ENCODE measurements at regions of chr2 and their contacts with region 1.

Region 1: DNA sequence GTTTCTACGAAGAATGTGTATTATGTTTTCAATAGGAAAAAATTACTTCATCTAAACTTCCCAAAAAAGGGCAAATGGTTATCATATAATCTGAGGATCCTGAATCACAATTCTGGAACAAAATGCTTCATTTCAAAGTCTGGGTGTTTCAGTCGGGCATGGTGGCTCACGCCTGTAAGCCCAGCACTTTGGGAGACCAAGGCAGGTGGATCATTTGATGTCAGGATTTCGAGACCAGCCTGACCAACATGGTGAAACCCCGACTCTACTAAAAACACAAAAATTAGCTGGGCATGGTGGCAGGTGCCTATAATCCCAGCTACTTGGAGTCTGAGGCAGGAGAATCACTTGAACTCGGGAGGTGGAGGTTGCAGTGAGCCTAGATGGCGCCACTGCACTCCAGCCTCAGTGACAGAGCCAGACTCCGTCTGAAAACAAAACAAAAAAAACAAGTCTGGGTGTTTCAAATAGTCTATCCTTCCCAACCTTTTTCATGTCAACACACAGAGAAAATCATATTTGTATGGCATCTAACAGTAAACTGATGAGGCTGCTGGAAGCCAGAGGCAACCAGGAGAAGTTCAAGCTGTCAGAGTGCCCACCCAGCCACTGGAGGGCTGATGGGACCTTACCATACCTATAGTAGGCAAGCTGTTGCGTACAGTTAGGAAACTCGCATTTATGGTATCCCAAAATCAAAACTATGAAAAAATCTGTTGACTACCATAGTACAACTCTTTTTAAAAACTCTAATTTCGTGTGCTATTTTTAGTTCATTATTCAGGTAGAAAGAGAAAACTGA is 14.6 kb downstream of the NBAS start:
- DNase-seq: no peak
- ATAC-seq: no peak
- H3K4me3 ChIP-seq: no peak overlapping the region
- H3K27ac ChIP-seq: no peak overlapping the region
- H3K4me1 ChIP-seq: no peaks in the 10 kb centered on the region
- H3K27me3 ChIP-seq: no peaks in the 10 kb centered on the region
- CTCF ChIP-seq: no peak
- EP300 ChIP-seq: no peak
- POLR2A ChIP-seq: no peak
- RAD21 ChIP-seq: no peak

Region 2: DNA sequence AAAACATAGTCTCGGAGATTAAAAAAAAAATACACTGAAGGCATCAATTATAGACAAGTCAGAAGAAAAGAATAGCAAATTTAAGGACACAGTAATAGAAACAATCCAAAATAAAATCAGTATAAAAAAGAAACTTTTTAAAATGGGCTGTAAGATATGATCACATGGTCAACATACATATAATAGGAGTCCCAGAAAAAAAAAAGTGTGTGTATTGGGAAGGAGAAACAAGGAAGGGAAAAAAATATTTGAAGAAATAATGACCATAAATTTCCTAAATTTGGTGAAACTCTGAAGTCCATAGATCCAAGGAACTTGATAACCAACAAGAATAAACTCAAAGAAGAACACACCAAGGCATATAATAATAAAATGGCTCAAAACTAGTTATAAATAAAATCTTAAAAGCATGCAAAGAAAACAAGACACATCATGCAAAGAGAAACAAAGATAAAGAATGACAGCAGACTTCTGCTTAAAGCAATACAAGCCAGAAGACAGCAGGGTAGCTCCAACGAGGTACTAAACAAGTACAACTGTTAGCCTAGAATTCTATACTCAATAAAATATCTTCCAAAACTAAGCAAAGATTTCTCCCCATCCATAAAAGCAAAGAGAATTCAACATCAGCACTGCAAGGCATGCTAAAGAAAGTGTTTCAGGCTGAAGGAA is 100.5 kb before region 1 on chr2:
- CTCF ChIA-PET with region 1: no interaction called
- POLR2A ChIA-PET with region 1: no interaction called
- RAD21 ChIA-PET with region 1: no interaction called
- SMC1A ChIA-PET with region 1: no interaction called
- in situ Hi-C with region 1: no loop called
- intact Hi-C with region 1: no loop called
- DNase-seq: no peak
- ATAC-seq: no peak
- H3K4me3 ChIP-seq: no peak overlapping the region
- H3K27ac ChIP-seq: no peak overlapping the region
- H3K4me1 ChIP-seq: no peaks in the 10 kb centered on the region
- H3K27me3 ChIP-seq: no peaks in the 10 kb centered on the region
- CTCF ChIP-seq: no peak
- EP300 ChIP-seq: no peak
- POLR2A ChIP-seq: no peak
- RAD21 ChIP-seq: no peak

Region 3: GRCh38 chr2:15560988-15561573 is 14.6 kb after region 1 on chr2 and contains the start of gene NBAS:
- CTCF ChIA-PET with region 1: interaction called, 21 read pairs
- POLR2A ChIA-PET with region 1: no interaction called
- RAD21 ChIA-PET with region 1: no interaction called
- SMC1A ChIA-PET with region 1: interaction called, 7 read pairs
- in situ Hi-C with region 1: no loop called
- intact Hi-C with region 1: no loop called
- DNase-seq: peak; percentile 37
- ATAC-seq: peak; percentile 89
- H3K4me3 ChIP-seq: peak within 1 kb of the TSS; percentile 99
- H3K27ac ChIP-seq: peak within 1 kb of the TSS; percentile 45
- H3K4me1 ChIP-seq: 0 out of 2 replicates have a peak, but pooled peaks cover 3% of the 10 kb centered on the region
- H3K27me3 ChIP-seq: no peaks in the 10 kb centered on the region
- CTCF ChIP-seq: no peak
- EP300 ChIP-seq: no peak
- POLR2A ChIP-seq: peak; percentile 83
- RAD21 ChIP-seq: no peak
- polyA plus RNA-seq, gene NBAS: 4.3 to 8.5 TPM